ENCODE measurements at regions of chr4 and their contacts with region 1.

Region 1: GRCh38 chr4:145494666-145495270 is 13.1 kb downstream of the SMAD1 start:
- DNase-seq: no peak
- CTCF ChIP-seq: no peak

Region 2: GRCh38 chr4:145388043-145388442 is 106.7 kb before region 1 on chr4:
- CTCF ChIA-PET with region 1: no interaction called
- POLR2A ChIA-PET with region 1: no interaction called
- DNase-seq: no peak
- CTCF ChIP-seq: no peak

Region 3: GRCh38 chr4:145483514-145483913 is 11.3 kb before region 1 on chr4:
- CTCF ChIA-PET with region 1: interaction called, 16 read pairs
- POLR2A ChIA-PET with region 1: no interaction called
- DNase-seq: no peak
- CTCF ChIP-seq: no peak

Region 4: DNA sequence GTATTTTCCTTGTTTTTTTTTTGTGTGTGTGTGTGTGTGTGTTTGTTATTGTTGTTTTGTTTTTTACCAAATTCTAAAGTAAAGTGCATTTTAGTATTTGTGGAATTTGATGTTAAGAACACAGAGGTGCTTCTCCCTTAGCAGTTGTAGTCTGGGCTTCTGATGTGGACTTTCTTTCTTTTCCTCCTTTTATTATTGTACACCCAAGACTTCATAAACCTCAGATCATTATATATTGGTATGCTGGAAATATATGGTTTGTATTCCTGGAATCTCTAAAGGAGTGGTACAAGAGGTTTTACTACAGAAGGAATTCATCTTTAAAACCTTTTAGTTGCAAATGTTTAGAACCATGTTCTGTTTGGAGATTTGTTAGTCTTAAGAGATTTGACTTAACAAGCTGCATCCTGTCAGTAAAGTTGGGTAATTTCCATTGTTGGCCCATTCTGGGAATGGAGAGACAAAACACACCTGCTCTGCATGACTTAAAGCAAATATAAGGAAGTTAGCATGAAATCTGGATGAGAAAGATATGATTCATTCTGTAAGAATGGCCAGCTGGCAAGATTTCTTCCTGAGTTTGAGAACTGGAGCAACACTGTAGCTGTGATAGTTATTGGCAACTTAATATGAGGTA is 50.9 kb after region 1 on chr4:
- CTCF ChIA-PET with region 1: no interaction called
- POLR2A ChIA-PET with region 1: no interaction called
- DNase-seq: no peak
- CTCF ChIP-seq: no peak

Region 5: DNA sequence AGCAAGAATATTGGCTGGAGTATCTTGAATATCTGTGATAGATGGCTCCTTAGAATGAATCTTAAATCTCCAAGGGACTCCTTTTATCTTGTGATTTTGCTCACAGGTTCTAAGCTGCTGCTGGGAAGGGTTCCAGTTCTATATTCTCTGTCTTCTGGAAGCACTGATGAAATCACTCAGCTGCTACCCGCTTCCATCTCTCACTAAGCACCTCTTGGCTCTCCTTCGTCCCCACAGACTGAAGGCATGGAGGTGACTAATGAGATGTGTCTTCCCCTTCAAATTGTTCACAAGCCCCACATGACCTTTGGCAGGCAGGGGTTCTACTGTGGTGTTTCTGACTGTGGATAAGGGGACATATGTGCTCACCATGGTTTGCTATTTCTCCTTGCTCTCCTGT is 261.0 kb after region 1 on chr4:
- CTCF ChIA-PET with region 1: no interaction called
- POLR2A ChIA-PET with region 1: no interaction called
- DNase-seq: no peak
- CTCF ChIP-seq: no peak

Measured in GM10248 (cell line).